ENCODE measurements at regions of chr3 and their contacts with region 1.

Region 1: DNA sequence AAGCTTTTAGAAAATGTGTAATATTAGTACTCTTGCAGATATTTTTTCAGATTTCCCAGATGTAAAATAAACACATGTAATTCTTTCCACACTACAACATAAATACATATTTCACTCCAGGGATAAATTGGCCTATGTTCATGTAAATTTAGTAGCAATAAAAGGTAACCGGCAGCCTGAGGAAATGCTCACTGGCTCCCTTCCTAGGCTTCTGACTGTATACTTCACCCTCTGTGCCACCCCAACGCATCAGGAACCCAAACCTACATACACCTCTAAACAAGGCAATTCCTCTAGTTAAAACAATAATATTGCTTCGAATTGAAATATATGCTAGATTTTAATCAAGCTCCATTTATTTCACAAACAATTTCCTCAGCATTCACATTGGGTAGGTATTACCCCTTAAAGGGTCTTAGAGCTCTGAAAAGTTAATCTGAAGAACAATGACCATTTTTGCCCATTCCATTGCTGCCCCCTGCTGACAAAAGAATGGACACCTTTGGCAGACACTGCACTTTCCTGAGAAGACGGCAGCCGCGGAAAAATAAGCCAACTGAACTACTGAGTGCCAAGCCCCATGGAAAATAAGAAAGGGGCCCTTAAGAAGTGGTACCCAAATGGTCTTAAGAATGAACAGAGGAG is 212.5 kb downstream of the OSBPL10 start:
- DNase-seq: peak; percentile 66
- H3K4me3 Mint-ChIP-seq: no peak overlapping the region
- H3K27ac Mint-ChIP-seq: peak overlapping the region; percentile 28
- H3K4me1 Mint-ChIP-seq: peaks cover 58% of the 10 kb centered on the region
- H3K27me3 Mint-ChIP-seq: peaks cover 4% of the 10 kb centered on the region

Region 2: GRCh38 chr3:31550452-31551251 is 217.9 kb before region 1 on chr3:
- CTCF ChIA-PET with region 1: interaction called, 7 read pairs
- POLR2A ChIA-PET with region 1: no interaction called
- intact Hi-C with region 1: loop called (anchors 1 kb)
- DNase-seq: no peak
- H3K4me3 Mint-ChIP-seq: no peak overlapping the region
- H3K27ac Mint-ChIP-seq: peak overlapping the region; percentile 33
- H3K4me1 Mint-ChIP-seq: peaks cover 74% of the 10 kb centered on the region
- H3K27me3 Mint-ChIP-seq: no peaks in the 10 kb centered on the region

Region 3: DNA sequence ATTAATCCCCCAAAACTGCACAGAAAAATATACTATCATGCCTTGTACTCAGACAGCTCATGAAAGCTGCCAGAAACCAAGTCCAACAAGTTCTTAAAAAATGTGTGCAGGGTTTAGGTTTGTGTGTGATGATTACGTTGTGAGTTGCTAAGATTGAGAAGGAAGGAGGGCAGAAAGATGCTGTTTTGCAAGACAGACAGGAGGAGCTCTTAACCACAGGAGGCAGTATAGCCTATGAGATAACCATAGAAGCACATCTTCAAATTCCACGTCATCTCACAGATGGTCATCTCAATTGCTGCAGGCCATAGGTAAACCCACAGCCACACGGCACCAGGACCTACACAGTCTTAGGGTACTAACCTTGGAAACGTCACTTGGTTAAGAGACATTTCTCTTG is 43.9 kb before region 1 on chr3:
- CTCF ChIA-PET with region 1: interaction called, 9 read pairs
- POLR2A ChIA-PET with region 1: no interaction called
- intact Hi-C with region 1: loop called (anchors 2 kb)
- DNase-seq: no peak
- H3K4me3 Mint-ChIP-seq: no peak overlapping the region
- H3K27ac Mint-ChIP-seq: no peak overlapping the region
- H3K4me1 Mint-ChIP-seq: no peaks in the 10 kb centered on the region
- H3K27me3 Mint-ChIP-seq: peaks cover 8% of the 10 kb centered on the region

Region 4: DNA sequence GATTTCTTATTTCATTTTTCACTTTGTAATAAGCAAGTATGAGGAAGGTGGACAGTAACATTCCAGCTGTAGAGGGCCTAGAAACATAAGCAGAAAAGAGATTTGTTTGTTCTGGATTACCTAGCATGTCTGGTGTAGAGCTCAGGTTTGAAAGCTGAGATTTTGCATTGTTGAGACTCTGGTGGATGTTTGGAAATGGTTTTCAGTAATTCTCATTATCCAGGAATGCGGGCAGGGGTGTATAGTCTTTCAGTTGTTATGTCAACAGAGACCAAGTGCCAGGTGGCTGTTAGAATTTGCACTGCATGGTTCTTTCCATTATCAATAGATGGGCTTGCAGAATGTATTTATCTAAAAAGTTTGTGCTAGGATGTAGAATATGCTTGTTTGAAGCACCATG is 348.7 kb after region 1 on chr3:
- CTCF ChIA-PET with region 1: no interaction called
- POLR2A ChIA-PET with region 1: no interaction called
- intact Hi-C with region 1: loop called (anchors 1 kb)
- DNase-seq: no peak
- H3K4me3 Mint-ChIP-seq: no peak overlapping the region
- H3K27ac Mint-ChIP-seq: no peak overlapping the region
- H3K4me1 Mint-ChIP-seq: peaks cover 54% of the 10 kb centered on the region
- H3K27me3 Mint-ChIP-seq: no peaks in the 10 kb centered on the region

Measured in activated CD4-positive, alpha-beta memory T cell treated with anti-CD3 and anti-CD28 coated beads for 36 hours (primary cell).